ENCODE measurements at regions of chr1 and their contacts with region 1.

Region 1: GRCh38 chr1:163844459-163844858 is 522.7 kb downstream of the NUF2 start:
- DNase-seq: no peak
- ATAC-seq: peak in 4 of 8 donors; percentile 55 to 81 (median 69)
- H3K4me3 ChIP-seq: no peak overlapping the region
- H3K27ac ChIP-seq: peak overlapping the region in 3 of 10 donors; percentile 13 to 40 (median 18)
- H3K4me1 ChIP-seq: peaks cover 0 to 9% (median 0%) of the 10 kb centered on the region in 9 donors
- H3K27me3 ChIP-seq: no peaks in the 10 kb centered on the region
- CTCF ChIP-seq: no peak

Region 2: DNA sequence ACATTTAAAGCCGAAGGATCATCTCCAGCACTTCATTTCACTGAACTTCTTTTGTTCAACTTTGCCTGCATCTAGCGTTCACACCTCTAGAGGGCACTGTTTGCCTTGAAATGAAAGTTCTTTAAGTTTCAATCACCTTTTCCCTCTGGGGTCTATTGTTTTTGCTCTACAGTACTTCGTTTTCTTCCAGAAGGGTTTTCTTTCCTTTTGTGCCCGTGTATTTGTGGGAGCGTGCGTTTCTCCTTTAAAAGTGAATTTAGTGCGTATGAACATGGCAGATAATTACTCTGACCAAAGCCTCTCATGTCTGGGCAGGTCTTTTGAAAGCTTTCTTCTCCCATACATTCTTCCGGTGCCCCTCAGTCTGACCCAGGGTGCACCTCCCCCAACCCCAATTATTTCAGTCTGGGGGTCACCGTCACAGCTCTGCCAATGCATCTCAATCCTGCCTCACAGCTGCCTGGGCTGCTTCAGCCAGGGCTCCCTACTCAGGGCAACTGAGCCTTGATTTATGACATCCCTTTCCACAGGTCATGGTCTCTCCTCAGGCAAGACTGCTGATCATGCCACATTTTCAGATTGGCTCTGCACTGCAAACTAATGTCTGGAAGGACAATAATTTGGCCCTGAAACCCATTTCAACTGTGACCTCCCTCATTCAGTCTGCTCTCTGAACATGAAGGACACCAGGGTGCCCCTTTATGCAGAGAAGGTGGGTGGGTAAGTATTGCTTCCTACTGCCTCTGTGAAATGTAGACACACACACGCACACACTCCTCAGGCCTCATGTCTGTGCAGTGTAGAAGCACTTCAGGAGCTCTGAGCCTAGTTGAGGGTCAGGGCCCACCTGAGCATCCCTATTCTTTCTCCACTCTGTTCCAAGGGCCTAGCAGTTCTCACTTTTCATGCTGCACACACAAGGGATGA is 434.1 kb before region 1 on chr1:
- intact Hi-C with region 1: no loop called
- DNase-seq: peak in 1 of 2 donors; percentile 17
- ATAC-seq: peak in 1 of 8 donors; percentile 9
- H3K4me3 ChIP-seq: no peak overlapping the region
- H3K27ac ChIP-seq: no peak overlapping the region
- H3K4me1 ChIP-seq: peaks cover 0 to 11% (median 0%) of the 10 kb centered on the region in 9 donors
- H3K27me3 ChIP-seq: peaks cover 0 to 3% (median 0%) of the 10 kb centered on the region in 7 donors
- CTCF ChIP-seq: peak; percentile 44 to 84 (median 78)

Region 3: DNA sequence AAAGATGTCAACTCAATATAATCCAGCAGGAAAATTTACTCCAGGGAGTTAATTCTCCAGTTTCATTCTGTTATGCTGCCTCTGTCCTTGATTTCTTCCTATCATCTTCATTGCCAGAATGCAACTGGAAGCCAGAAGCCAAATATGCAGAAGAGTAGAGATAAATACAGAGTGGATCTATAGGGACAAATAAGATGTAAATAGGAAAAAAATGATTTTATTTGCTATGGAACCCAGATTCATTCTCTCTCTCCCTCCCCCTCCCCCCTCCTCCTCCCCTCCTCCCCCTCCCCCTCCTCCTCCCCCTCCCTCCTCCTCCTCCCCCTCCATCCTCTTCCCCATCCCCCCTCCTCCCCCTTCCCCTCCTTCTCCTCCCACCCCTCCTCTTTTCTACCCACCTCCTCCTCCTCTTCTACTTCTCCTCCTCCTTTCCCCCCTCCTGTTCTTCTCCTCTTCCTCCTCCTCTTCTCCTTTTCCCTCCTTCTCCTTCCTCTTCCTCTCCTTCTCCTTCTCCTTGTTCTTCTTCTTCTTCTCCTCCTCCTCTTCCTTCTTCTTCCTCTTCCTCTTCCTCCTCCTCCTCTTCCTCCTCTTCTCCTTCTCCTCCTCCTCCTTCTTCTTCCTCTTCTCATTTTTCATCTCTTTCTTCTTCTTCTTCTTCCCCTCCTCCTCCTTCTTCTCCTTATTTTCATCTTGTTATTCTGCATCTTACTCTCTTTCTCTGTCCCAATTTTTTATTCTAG is 216.3 kb before region 1 on chr1:
- intact Hi-C with region 1: no loop called
- DNase-seq: no peak
- ATAC-seq: no peak
- H3K4me3 ChIP-seq: no peak overlapping the region
- H3K27ac ChIP-seq: no peak overlapping the region
- H3K4me1 ChIP-seq: no peaks in the 10 kb centered on the region
- H3K27me3 ChIP-seq: no peaks in the 10 kb centered on the region
- CTCF ChIP-seq: no peak

Region 4: DNA sequence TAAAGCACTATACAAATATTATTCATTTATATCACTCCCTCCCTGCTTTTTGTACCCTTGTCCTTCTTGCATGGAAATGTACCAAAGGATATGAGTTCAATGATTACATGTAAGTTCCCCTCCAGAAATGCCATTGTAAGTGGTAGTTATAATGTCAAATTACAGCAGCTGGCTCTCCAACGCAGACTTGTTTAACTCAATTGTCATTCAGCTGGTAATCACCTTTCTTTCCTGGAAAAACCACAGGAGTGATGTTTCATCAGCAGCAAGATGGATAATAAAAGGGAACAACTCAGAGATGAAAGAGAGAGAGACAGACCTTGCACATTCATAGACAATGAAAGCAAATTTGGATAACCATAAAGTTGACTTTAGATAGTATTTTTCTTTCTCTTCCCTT is 135.9 kb after region 1 on chr1:
- intact Hi-C with region 1: no loop called
- DNase-seq: no peak
- ATAC-seq: no peak
- H3K4me3 ChIP-seq: no peak overlapping the region
- H3K27ac ChIP-seq: no peak overlapping the region
- H3K4me1 ChIP-seq: no peaks in the 10 kb centered on the region
- H3K27me3 ChIP-seq: no peaks in the 10 kb centered on the region
- CTCF ChIP-seq: no peak

Region 5: DNA sequence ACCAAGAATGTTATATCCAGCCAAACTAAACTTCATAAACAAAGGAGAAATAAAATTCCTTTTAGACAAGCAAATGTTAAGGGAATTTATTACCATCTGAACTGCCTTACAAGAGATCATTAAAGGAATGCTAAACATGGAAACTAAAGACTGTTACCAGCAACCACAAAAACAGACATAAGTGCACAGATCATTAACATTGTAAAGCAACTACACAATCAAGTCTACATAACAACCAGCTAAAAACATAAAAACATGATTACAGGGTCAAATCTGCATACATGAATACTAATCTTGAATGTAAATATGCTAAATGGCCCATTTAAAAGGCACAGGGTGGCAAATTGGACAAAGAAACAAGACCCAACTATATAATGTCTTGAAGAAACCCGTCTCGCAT is 503.5 kb after region 1 on chr1:
- intact Hi-C with region 1: loop called in 1 of 10 experiments (anchors 5 kb)
- DNase-seq: no peak
- ATAC-seq: no peak
- H3K4me3 ChIP-seq: no peak overlapping the region
- H3K27ac ChIP-seq: no peak overlapping the region
- H3K4me1 ChIP-seq: no peaks in the 10 kb centered on the region
- H3K27me3 ChIP-seq: no peaks in the 10 kb centered on the region
- CTCF ChIP-seq: no peak